Kidney (tissue), 22 donors: ENCODE measurements at regions of chr1 and their contacts with region 1.

Region 1: DNA sequence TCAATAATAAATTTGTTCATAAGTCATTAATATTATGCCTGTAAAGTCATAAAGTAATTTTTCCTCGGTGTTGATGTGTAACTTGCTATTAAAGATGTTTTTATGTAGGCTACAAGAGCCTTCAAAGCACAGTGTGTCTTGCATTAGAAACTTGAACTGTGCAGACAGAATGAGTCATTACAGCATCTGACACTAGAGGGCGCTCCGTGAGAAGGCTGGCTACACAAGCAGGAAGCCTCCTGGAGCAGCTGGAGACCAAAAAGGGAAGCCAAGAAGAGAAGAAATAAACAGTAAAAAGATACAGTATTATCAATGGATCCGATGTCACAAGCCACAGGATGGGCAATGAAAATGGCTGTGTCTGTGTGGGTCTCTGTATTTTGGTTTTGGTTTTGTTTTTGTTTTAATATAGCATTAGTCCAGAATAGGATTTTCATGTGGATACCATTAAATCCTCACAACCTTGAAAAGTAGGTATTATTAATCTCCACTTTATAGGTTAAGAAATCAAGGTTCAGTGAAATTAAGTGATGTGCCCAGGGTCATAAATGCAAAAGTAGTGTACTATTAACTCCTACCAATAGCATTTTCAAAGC is 16.1 kb upstream of the LRRC8D start:
- DNase-seq: peak; percentile 66 to 93 (median 88)
- H3K4me3 ChIP-seq: no peak overlapping the region
- H3K27ac ChIP-seq: no peak overlapping the region
- H3K4me1 ChIP-seq: no peaks in the 10 kb centered on the region
- H3K27me3 ChIP-seq: no peaks in the 10 kb centered on the region
- CTCF ChIP-seq: peak; percentile 97

Region 2: DNA sequence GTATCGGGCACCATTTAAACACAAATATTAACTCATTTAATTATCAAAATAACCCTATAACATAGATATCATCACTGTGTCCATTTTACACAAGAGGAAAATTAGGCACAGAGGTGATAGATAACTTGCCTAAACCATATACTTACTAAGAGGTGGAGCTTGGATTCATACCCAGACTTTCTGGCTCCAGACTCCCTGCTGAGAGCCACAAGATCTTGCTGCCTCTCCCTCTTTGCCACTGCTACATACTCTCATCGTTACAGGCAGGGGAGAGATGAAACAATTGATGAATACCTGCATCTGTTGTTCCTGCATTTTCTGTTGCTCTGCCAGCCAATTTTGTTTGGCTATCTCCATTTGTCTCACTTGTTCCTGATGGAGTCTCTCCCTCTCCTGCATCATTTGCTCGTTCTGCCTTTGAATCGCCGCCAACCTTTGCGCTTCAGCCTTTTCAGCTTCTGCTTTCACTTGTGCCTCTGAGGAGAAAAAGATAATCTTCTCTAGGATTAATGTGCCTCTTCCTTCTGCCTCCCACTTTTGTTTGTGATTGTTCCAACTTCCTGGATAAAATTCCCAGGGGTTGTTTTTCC is 542.7 kb before region 1 on chr1:
- intact Hi-C with region 1: no loop called
- DNase-seq: peak in 1 of 5 donors; percentile 17
- H3K4me3 ChIP-seq: peak overlapping the region in 1 of 3 donors; percentile 10
- H3K27ac ChIP-seq: no peak overlapping the region
- H3K4me1 ChIP-seq: peaks cover 0 to 4% (median 2%) of the 10 kb centered on the region in 3 donors
- H3K27me3 ChIP-seq: no peaks in the 10 kb centered on the region
- CTCF ChIP-seq: no peak

Region 3: DNA sequence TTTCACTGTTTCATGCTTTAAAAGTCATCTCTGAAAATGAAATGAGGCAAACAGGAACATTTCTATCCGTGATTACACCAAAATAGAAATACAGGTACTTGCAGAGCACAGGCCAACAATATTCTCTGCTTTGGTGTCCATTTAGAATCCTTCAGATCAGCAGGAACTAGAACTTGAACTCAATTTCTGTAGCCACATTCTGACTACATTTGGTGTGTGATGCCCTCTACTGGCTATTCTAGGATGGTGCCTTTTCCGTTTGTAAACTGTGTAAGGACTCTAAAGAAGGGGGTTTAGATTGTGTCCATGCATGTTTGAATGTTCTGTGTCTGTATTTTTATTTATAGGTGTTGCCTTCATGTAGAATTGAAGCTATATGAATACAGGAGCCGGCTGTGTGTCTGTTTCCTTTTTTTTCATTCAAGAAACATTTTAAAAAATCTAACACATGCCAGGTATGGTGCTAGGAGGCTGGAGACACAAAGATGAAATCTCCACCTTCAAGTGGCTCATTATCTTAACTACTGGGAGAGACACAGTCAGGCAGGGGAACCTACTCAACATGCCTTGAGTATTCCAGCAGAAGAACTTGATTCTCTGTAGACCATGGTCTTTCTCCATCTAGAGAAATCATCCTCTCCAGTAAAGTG is 182.6 kb after region 1 on chr1:
- intact Hi-C with region 1: loop called (anchors 5 kb)
- DNase-seq: peak in 4 of 5 donors; percentile 48 to 91 (median 80)
- H3K4me3 ChIP-seq: no peak overlapping the region
- H3K27ac ChIP-seq: no peak overlapping the region
- H3K4me1 ChIP-seq: no peaks in the 10 kb centered on the region
- H3K27me3 ChIP-seq: no peaks in the 10 kb centered on the region
- CTCF ChIP-seq: peak; percentile 85